Activated CD4-positive, alpha-beta T cell treated with anti-CD3 and anti-CD28 coated beads, Interleukin-2, amount 10 ng/mL, durations not matched to agents 24 days and 14 days (primary cell): ENCODE measurements at regions of chr5 and their contacts with region 1.

Region 1: GRCh38 chr5:75336625-75337339 is at the start of gene HMGCR:
- DNase-seq: peak; percentile 99
- H3K4me3 Mint-ChIP-seq: no peak within 1 kb of the TSS
- H3K27ac Mint-ChIP-seq: no peak within 1 kb of the TSS
- H3K4me1 Mint-ChIP-seq: peaks cover 34% of the 10 kb centered on the region
- H3K27me3 Mint-ChIP-seq: no peaks in the 10 kb centered on the region
- total RNA-seq, gene HMGCR: 99.9 and 112 TPM in 2 replicates

Region 2: DNA sequence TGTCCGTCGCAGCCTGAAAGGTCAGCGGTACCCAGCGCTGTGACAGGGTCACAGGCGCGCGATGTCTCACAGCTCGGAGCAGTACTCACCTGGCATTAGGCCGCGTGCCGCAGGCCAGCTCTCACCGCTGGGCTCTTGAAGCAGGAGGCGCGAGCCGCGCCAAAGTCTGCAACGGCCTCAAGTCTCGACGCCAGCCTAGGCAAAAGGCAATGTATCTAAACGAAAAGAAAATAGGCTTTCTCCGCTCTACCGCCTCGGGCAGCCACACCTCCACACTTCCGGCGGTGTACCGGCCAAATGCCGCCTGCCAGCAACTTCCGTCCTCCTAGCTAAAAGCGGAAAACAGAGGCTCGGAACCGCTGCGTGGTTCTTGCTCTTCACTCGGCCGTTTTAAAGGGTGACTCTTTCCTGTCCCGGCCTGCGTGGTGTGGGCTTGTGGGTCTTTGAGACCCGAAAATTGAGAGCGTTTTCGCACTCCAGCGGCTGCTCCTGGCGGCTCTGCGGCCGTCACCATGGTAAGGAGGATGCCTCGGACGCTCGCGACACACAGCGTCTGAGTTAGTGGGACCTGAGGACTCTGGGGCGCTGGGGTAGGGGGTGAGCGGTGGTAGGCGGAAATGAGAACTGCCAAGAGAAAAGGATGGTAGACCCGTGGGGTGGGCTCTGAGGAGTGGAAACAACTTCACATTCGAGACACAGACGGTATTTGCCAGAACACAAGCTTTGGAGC is 569.8 kb before region 1 on chr5 and contains the starts of genes GFM2 and NSA2:
- intact Hi-C with region 1: loop called (anchors 2 kb)
- DNase-seq: peak; percentile 98
- H3K4me3 Mint-ChIP-seq: peak within 1 kb of the TSS; percentile 99
- H3K27ac Mint-ChIP-seq: peak within 1 kb of the TSS; percentile 98
- H3K4me1 Mint-ChIP-seq: peaks cover 25% of the 10 kb centered on the region
- H3K27me3 Mint-ChIP-seq: no peaks in the 10 kb centered on the region
- total RNA-seq, gene GFM2: 37.9 and 42.7 TPM in 2 replicates
- total RNA-seq, gene NSA2: 94.0 and 95.8 TPM in 2 replicates

Region 3: DNA sequence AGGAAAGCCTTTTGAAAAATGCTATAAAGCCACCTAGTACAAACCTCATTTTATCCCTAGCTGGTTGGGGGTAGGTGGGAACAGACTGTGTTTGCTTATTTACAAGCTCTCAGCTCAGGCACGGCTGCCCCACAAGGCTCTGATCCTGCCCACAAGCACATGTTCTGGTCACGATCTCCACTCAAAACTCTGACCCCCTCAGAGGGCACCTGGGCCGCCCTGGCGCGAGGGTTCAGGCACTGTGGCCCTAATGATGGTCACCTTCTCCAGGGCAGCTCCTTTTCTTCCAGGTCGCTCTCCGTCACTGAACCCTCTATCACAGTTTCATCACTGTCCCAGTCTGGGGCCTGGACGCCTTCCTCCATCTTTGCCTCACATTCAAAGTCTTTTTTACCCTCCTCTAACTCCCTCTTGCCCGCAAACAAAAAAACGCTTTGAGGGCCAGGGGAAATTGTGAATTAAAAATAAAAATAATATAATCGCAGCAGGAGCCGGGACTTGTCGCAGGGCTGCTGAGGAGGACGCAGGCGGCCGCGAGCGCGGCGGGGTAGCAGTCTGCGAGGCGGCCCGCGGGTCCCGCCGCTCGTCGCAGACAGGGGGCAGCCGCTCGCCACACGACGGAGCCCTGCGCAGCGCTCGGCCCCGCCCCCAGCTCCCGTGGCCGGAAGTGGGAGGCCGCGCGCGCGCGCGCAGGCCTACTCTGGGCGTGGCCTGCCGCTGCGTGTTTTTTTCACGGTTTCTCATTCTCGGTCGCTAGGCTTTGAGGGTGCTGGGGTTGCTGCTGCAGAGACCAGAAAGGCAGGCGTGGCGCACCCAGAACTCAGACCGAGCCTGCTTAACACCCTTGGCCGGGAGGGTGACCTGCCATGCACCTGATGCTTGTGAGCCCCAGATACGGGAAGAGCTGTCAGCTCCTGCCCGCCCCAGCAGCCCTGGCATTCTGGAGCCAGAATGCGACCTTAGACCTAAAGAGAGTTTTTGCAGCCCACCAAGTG is 100.2 kb before region 1 on chr5 and contains the start of gene ANKRD31:
- intact Hi-C with region 1: loop called (anchors 1 kb)
- DNase-seq: peak; percentile 97
- H3K4me3 Mint-ChIP-seq: peak within 1 kb of the TSS; percentile 96
- H3K27ac Mint-ChIP-seq: peak within 1 kb of the TSS; percentile 93
- H3K4me1 Mint-ChIP-seq: peaks cover 13% of the 10 kb centered on the region
- H3K27me3 Mint-ChIP-seq: no peaks in the 10 kb centered on the region
- total RNA-seq, gene ANKRD31: 0.33 and 0.47 TPM in 2 replicates

Region 4: GRCh38 chr5:75351139-75351926 is 14.6 kb after region 1 on chr5:
- intact Hi-C with region 1: loop called (anchors 1 kb)
- DNase-seq: no peak
- H3K4me3 Mint-ChIP-seq: peak overlapping the region; percentile 3
- H3K27ac Mint-ChIP-seq: peak overlapping the region; percentile 78
- H3K4me1 Mint-ChIP-seq: peaks cover 23% of the 10 kb centered on the region
- H3K27me3 Mint-ChIP-seq: no peaks in the 10 kb centered on the region

Region 5: GRCh38 chr5:75381456-75381855 is 44.7 kb after region 1 on chr5:
- intact Hi-C with region 1: no loop called
- DNase-seq: no peak
- H3K4me3 Mint-ChIP-seq: no peak overlapping the region
- H3K27ac Mint-ChIP-seq: no peak overlapping the region
- H3K4me1 Mint-ChIP-seq: peaks cover 5% of the 10 kb centered on the region
- H3K27me3 Mint-ChIP-seq: no peaks in the 10 kb centered on the region

Region 6: DNA sequence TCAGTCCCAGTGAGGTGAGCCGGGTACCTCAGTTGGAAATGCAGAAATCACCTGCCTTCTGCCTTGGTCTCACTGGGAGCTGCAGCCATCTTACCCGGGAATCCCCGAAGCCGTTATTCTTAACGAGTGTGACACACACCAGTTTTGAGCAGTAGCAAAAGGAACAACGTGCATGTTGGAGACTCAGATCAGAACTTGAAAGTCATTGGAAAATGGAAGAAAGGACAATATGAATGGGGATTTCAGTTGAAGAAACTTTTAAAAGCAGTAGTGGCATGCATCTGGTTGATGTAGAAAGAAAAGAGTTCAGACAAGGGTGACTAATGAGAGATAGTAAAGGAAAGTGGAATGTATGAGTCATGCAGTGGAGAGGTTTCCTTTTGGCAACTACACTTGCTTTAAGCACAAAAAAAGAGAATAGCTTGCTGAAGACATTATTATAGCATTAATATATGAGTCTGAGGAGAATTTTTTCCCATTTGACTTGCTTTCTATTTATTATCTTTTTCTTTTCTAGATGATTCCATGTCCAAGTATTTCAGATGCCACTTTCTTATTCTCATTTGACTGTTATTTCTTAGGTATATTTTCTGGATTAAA is 230.0 kb after region 1 on chr5:
- intact Hi-C with region 1: loop called (anchors 5 kb)
- DNase-seq: peak; percentile 83
- H3K4me3 Mint-ChIP-seq: peak overlapping the region; percentile 84
- H3K27ac Mint-ChIP-seq: peak overlapping the region; percentile 98
- H3K4me1 Mint-ChIP-seq: peaks cover 39% of the 10 kb centered on the region
- H3K27me3 Mint-ChIP-seq: peaks cover 2% of the 10 kb centered on the region

Region 7: DNA sequence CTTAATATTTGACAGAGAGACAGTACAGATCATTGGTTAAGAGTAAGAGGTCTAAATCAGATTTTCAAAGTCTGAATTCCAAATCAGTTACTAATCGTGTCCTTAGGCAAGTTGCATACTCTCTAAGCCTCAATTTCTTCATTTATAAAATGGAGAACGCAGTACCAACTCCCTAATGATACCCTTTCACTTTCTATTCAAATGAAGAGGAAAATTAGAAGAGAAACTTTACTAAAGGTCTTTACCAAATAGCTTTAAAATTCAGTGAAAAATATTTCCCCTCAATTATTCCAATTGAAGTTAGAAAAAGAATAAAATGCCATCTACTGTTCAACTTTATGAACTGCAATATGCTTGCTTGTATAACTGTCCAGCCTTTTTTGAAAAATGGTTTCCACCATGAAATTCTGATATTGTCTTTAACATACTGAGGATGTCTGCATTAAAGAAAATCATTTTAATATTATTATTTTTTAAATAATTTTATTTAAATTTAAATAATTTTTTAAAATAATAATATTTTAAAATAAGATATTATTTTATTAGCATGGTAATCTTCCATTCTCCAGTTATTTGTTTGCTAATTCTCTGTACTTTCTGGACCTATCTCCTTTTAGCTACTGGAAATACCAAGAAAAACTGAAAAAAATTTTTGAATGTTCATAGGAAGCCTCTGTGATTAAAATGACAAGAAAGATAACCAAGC is 344.5 kb after region 1 on chr5:
- intact Hi-C with region 1: loop called (anchors 1 kb)
- DNase-seq: no peak
- H3K4me3 Mint-ChIP-seq: no peak overlapping the region
- H3K27ac Mint-ChIP-seq: no peak overlapping the region
- H3K4me1 Mint-ChIP-seq: peaks cover 8% of the 10 kb centered on the region
- H3K27me3 Mint-ChIP-seq: no peaks in the 10 kb centered on the region

Region 8: DNA sequence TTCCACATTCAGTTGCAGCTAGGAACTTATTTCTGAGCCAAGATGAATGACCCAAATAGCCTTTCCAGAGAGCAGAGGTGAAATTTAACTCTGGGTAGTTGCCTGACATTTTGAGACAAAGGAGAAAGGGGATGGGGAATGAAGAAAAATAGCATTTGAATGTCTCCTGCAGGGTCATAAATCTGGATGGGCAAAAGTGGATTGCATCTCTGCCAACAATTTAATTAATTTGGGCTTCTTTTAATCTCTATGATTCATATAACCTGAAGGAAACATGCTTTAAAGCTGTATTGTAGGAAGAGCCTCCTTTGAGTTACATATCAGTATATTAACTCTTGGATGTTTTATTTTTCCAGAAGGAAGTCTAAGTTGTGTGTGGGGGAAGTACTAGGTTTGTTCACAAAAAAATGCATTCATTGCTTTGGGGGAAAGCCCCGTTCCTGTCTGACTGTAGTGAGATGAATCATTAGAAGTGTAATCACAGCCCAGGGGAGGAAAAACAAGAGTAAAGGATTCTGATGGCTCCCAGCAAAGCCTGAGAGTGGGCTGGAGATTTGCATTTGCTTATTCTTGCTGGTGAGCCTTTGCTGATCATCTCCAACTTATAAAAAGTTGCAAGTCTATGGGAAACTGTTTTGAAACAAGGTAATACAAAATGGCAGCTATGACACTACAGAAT is 933.3 kb after region 1 on chr5:
- intact Hi-C with region 1: loop called (anchors 5 kb)
- DNase-seq: peak; percentile 77
- H3K4me3 Mint-ChIP-seq: peak overlapping the region; percentile 83
- H3K27ac Mint-ChIP-seq: peak overlapping the region; percentile 95
- H3K4me1 Mint-ChIP-seq: peaks cover 41% of the 10 kb centered on the region
- H3K27me3 Mint-ChIP-seq: no peaks in the 10 kb centered on the region